ENCODE measurements at regions of chr1 and their contacts with region 1.

Region 1: GRCh38 chr1:85799737-85800136 is 91.5 kb upstream of the ZNHIT6 start:
- DNase-seq: no peak
- H3K4me3 ChIP-seq: no peak overlapping the region
- H3K27ac ChIP-seq: no peak overlapping the region
- H3K4me1 ChIP-seq: no peaks in the 10 kb centered on the region
- H3K27me3 ChIP-seq: peaks cover 3 to 11% of the 10 kb centered on the region in 2 experiments
- CTCF ChIP-seq: no peak
- POLR2A ChIP-seq: no peak

Region 2: DNA sequence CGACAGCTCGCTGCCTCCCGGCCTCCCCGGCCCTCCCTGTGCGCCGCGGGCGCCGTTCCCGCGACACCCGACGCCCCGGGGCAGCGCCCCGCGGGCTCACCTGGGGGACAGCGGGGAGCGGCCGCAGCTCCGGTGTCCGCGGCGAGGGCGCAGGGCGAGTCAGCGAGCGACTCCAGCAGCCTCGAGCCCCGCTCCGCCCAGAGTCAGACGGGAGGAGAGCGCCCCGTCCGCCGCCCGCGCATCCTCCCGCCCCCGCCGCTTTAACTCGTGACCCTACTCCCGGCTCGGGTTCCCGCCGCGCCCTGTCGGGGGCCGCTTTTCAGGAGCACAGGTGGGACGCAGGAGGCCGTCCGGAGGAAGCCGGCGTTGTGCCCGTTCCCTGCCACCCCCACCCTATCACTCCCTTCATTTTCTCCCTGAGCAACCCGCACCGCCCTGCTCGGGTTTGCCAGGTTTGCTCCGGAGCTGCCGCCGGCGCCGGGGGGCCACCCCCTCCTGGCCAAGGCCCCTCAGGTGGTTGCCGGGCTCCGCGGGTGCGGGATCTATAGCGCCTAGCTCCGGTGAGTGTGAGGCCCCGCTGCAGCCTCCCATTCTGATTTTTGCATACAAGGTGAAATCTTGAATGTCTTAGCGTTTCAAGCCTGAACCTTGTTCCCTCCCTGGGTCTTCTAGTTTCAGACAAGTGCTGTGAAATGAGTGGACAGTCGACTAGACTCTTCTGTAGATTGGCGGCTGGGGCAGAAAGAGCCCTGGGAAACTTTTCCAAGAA is 751.3 kb before region 1 on chr1 and contains the start of gene MCOLN3:
- CTCF ChIA-PET with region 1: no interaction called
- POLR2A ChIA-PET with region 1: no interaction called
- dilution Hi-C with region 1: no loop called
- intact Hi-C with region 1: loop called (anchors 5 kb)
- DNase-seq: no peak
- H3K4me3 ChIP-seq: peak within 1 kb of the TSS in 1 of 3 experiments; percentile 26
- H3K27ac ChIP-seq: no peak within 1 kb of the TSS
- H3K4me1 ChIP-seq: no peaks in the 10 kb centered on the region
- H3K27me3 ChIP-seq: peaks cover 52 to 76% of the 10 kb centered on the region in 2 experiments
- CTCF ChIP-seq: no peak
- POLR2A ChIP-seq: no peak
- total RNA-seq, gene MCOLN3: not detected in 2 replicates

Measured in endothelial cell of umbilical vein (primary cell).